Calu3 (cell line): ENCODE measurements at regions of chr10 and their contacts with region 1.

Region 1: DNA sequence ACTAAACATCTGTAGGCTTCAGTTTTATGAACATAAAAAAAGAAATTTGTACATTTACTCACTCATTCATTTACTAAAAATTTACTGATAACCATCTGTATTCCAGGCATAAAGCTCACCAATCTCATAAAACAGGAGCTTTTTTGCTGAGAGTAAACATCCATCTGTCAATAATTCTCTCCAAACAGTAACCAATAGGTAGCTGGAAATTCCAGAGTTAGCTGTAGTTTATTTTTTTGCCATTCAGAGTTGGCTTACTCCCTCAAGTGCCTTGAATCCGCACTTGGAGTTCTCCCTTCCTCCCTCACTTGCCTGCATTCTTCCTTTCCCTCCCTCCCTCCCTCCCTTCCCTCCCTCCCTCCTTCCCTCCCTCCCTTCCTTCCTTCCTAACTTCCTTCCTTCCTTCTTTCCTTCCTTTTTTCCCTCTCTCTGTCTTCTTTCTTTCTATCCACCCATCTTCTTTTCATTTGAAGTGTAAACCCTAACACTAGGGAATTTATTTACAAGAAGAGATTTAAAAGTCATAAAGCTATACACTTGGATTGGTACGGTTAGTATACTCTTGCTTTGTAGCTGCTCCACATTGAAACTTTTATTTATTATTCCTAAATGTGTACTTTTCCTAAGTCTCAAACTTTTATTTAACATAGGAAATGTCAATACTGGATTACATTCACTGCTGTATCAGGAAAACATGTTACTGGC is 44.6 kb upstream of the BICC1 start:
- DNase-seq: no peak
- H3K4me3 Mint-ChIP-seq: peak overlapping the region; percentile 4
- H3K27ac Mint-ChIP-seq: no peak overlapping the region
- H3K4me1 Mint-ChIP-seq: peaks cover 50% of the 10 kb centered on the region
- H3K27me3 Mint-ChIP-seq: peaks cover 17% of the 10 kb centered on the region
- CTCF ChIP-seq: no peak

Region 2: GRCh38 chr10:58393317-58393716 is 74.8 kb before region 1 on chr10:
- CTCF ChIA-PET with region 1: no interaction called
- intact Hi-C with region 1: no loop called
- DNase-seq: no peak
- H3K4me3 Mint-ChIP-seq: no peak overlapping the region
- H3K27ac Mint-ChIP-seq: no peak overlapping the region
- H3K4me1 Mint-ChIP-seq: peaks cover 9% of the 10 kb centered on the region
- H3K27me3 Mint-ChIP-seq: no peaks in the 10 kb centered on the region
- CTCF ChIP-seq: no peak

Region 3: GRCh38 chr10:58414270-58415041 is 53.6 kb before region 1 on chr10:
- CTCF ChIA-PET with region 1: no interaction called
- intact Hi-C with region 1: loop called (anchors 2 kb)
- DNase-seq: peak; percentile 63
- H3K4me3 Mint-ChIP-seq: no peak overlapping the region
- H3K27ac Mint-ChIP-seq: no peak overlapping the region
- H3K4me1 Mint-ChIP-seq: peaks cover 32% of the 10 kb centered on the region
- H3K27me3 Mint-ChIP-seq: no peaks in the 10 kb centered on the region
- CTCF ChIP-seq: peak; percentile 71

Region 4: GRCh38 chr10:58435297-58435985 is 32.6 kb before region 1 on chr10:
- CTCF ChIA-PET with region 1: interaction called, 5 read pairs
- intact Hi-C with region 1: loop called (anchors 2 kb)
- DNase-seq: peak; percentile 78
- H3K4me3 Mint-ChIP-seq: peak overlapping the region; percentile 48
- H3K27ac Mint-ChIP-seq: peak overlapping the region; percentile 89
- H3K4me1 Mint-ChIP-seq: peaks cover 57% of the 10 kb centered on the region
- H3K27me3 Mint-ChIP-seq: no peaks in the 10 kb centered on the region
- CTCF ChIP-seq: no peak

Region 5: DNA sequence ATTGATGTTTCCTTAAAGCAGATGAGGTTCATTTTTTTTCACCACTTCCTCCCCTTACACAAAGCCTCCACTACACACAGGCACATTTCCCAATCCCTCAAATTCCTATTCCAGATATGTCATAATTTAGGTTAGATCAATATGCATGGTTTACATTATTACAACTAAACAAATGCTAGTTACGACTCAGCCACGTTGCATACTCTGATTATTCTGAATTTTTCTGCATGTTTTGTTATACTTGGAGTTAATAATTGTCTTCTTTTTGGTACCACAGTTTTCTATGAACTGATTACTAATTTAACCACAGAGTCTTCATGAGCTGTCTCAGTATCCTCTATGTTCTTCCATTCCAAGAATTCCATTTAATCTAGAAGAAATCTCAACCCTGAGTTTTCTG is 40.2 kb after region 1 on chr10:
- CTCF ChIA-PET with region 1: interaction called, 5 read pairs
- intact Hi-C with region 1: loop called (anchors 1 kb)
- DNase-seq: no peak
- H3K4me3 Mint-ChIP-seq: no peak overlapping the region
- H3K27ac Mint-ChIP-seq: no peak overlapping the region
- H3K4me1 Mint-ChIP-seq: peaks cover 16% of the 10 kb centered on the region
- H3K27me3 Mint-ChIP-seq: no peaks in the 10 kb centered on the region
- CTCF ChIP-seq: no peak